ENCODE measurements at regions of chr15 and their contacts with region 1.

Region 1: GRCh38 chr15:22866079-22866478 is 27.6 kb downstream of the NIPA2 start:
- DNase-seq: no peak
- ATAC-seq: no peak
- H3K4me3 ChIP-seq: no peak overlapping the region
- H3K4me3 Mint-ChIP-seq: no peak overlapping the region
- H3K27ac ChIP-seq: no peak overlapping the region
- H3K27ac Mint-ChIP-seq: peak overlapping the region; percentile 22
- H3K4me1 ChIP-seq: no peaks in the 10 kb centered on the region
- H3K4me1 Mint-ChIP-seq: peaks cover 8% of the 10 kb centered on the region
- H3K27me3 ChIP-seq: no peaks in the 10 kb centered on the region
- H3K27me3 Mint-ChIP-seq: no peaks in the 10 kb centered on the region
- CTCF ChIP-seq: no peak

Region 2: GRCh38 chr15:22846073-22846472 is 20.0 kb before region 1 on chr15:
- CTCF ChIA-PET with region 1: no interaction called
- POLR2A ChIA-PET with region 1: no interaction called
- intact Hi-C with region 1: loop called in 1 of 2 experiments (anchors 2 kb)
- DNase-seq: no peak
- ATAC-seq: no peak
- H3K4me3 ChIP-seq: no peak overlapping the region
- H3K4me3 Mint-ChIP-seq: no peak overlapping the region
- H3K27ac ChIP-seq: no peak overlapping the region
- H3K27ac Mint-ChIP-seq: no peak overlapping the region
- H3K4me1 ChIP-seq: peaks cover 10% of the 10 kb centered on the region
- H3K4me1 Mint-ChIP-seq: peaks cover 58% of the 10 kb centered on the region
- H3K27me3 ChIP-seq: no peaks in the 10 kb centered on the region
- H3K27me3 Mint-ChIP-seq: no peaks in the 10 kb centered on the region
- CTCF ChIP-seq: no peak

Region 3: DNA sequence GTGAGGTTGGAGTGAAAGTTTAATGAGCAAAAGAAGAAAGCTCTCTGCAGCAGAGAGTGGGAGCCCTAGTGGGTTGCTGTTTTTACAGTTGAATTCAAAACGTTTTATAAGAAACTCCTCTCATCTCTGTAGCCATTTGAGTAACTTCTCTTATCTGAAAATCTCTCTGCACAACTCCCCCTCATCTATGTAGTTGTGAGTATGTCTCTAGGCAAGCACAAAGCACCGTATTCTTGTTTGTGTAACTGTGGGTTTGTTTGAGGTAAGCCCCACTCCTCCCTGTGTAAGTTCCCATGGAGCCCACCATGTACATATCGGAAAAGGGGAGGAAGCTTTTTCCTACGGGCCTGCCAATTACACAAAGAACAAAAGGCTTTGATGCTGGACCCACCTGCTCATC is 637.5 kb after region 1 on chr15:
- CTCF ChIA-PET with region 1: no interaction called
- POLR2A ChIA-PET with region 1: no interaction called
- intact Hi-C with region 1: no loop called
- DNase-seq: peak in 1 of 9 experiments; percentile 3
- ATAC-seq: no peak
- H3K4me3 ChIP-seq: no peak overlapping the region
- H3K4me3 Mint-ChIP-seq: no peak overlapping the region
- H3K27ac ChIP-seq: no peak overlapping the region
- H3K27ac Mint-ChIP-seq: no peak overlapping the region
- H3K4me1 ChIP-seq: no peaks in the 10 kb centered on the region
- H3K4me1 Mint-ChIP-seq: peaks cover 4% of the 10 kb centered on the region
- H3K27me3 ChIP-seq: no peaks in the 10 kb centered on the region
- H3K27me3 Mint-ChIP-seq: peaks cover 2% of the 10 kb centered on the region
- CTCF ChIP-seq: no peak

Measured in CD8-positive, alpha-beta T cell (primary cell).